ENCODE measurements at regions of chr3 and their contacts with region 1.

Region 1: DNA sequence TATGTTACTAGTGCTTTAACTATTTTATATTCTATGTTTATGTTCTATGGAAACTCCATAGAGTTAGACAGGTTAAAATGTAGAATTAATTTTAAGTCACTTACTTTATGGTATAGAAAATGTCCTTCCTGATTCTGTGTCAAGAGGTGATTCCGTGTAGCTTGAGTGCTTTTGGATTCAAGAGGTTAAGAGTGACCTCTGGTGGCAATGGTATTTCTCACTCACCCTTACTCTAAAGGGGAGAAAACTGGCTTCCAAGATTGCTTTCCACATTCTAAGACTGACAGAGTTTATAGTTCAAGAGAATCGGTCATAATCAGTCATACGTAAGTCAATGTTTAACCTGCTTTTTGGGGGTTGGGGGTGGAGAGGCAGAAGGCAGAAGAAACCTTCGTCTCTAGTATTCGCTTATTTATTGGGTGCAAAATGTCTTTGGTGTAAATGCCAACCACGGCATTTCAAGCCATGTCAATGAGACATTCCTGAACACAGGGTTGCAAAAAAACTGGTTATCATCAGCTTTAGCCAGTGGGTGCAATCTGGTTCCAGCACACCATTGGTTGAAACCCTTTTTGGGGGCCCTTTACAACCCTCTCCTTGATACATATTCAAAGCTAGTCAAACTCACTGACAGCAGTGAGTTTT is 92.0 kb upstream of the VGLL3 start:
- DNase-seq: no peak
- H3K4me3 ChIP-seq: no peak overlapping the region
- H3K27ac ChIP-seq: no peak overlapping the region
- H3K4me1 ChIP-seq: no peaks in the 10 kb centered on the region
- H3K27me3 ChIP-seq: no peaks in the 10 kb centered on the region
- CTCF ChIP-seq: peak; percentile 46 to 61 (median 49)
- EP300 ChIP-seq: no peak
- POLR2A ChIP-seq: no peak

Region 2: DNA sequence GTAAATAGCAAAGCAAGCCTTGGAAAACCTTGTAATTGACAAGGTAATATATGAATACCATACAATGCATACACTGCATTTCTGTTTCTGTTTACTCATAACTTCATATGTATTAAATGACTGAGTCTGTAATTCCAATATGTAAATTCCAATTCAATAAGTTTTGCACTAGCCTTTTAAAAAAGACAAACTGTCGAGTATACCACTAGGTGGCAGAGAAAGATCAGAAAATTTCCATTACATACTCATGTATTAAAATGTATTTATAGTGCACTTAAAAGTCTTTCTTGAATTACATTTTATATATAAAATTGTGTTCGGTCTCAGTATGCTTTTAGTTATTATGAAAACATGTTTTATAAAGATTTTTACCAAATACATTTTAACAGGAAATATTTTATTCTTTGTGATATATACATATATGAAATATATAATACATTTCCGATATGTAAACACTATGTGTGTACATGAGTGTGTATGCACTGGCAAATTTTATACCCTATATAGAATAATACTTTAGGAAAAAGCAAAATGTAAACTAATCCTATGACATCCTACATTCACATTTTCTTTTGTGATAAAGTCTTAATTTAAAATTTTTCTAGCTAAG is 308.7 kb before region 1 on chr3:
- intact Hi-C with region 1: loop called (anchors 5 kb)
- DNase-seq: no peak
- H3K4me3 ChIP-seq: no peak overlapping the region
- H3K27ac ChIP-seq: no peak overlapping the region
- H3K4me1 ChIP-seq: no peaks in the 10 kb centered on the region
- H3K27me3 ChIP-seq: no peaks in the 10 kb centered on the region
- CTCF ChIP-seq: peak; percentile 37 to 60 (median 57)
- EP300 ChIP-seq: no peak
- POLR2A ChIP-seq: no peak

Region 3: DNA sequence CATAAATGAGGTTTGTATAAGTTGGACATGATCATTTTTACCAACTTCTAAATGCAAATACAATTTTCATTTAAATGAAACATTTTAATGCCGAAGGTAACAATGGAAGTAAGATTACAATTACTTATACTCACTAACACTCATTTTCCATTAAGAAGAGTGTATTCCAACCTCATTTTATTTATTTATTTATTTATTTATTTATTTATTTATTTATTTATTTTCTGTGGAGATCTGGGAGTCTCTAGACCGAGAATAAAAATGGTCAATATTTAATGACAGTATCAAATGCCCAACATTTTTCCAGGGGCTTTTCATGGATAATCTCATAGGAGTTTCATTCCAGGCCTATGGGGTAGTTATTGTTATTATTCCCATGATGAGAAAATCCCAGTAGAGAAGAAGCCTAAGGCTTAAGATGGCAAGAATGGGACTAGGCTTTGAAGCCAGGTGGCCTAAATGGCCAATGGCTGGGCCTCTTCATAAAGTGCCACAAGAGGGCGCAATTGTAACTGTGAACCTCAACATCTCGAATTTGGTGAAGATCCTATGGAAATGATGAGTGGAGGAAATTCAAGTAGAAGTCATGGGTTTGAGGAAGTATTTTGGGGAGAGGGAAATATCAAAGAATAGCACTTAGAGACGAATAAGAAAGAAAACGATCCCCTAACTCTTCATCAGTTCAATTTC is 113.3 kb before region 1 on chr3:
- intact Hi-C with region 1: loop called (anchors 5 kb)
- DNase-seq: no peak
- H3K4me3 ChIP-seq: no peak overlapping the region
- H3K27ac ChIP-seq: no peak overlapping the region
- H3K4me1 ChIP-seq: peaks cover 0 to 6% (median 0%) of the 10 kb centered on the region in 4 donors
- H3K27me3 ChIP-seq: no peaks in the 10 kb centered on the region
- CTCF ChIP-seq: peak; percentile 35 to 65 (median 41)
- EP300 ChIP-seq: no peak
- POLR2A ChIP-seq: no peak

Measured in esophagus muscularis mucosa (tissue), 4 donors.